Colonic mucosa (tissue), 4 donors: ENCODE measurements at regions of chr16 and their contacts with region 1.

Region 1: DNA sequence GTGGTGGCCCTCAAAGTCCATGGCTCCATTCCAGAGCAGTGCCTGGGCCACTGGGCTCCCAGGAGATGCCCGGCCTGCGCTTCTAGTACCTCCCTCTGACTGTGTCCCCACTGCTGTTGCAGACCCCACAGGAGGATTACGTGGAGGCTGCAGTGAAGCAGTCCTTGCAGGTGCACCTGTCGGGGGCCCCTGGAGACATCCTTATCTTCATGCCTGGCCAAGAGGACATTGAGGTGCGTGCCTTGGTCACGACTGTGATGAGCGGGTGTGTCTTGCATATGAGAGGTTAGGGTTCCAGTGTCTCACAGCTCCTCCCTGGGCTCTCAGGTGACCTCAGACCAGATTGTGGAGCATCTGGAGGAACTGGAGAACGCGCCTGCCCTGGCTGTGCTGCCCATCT is 11.3 kb downstream of the DHX38 start:
- DNase-seq: no peak
- H3K4me3 ChIP-seq: no peak overlapping the region
- H3K27ac ChIP-seq: no peak overlapping the region
- H3K4me1 ChIP-seq: no peaks in the 10 kb centered on the region
- H3K27me3 ChIP-seq: no peaks in the 10 kb centered on the region
- CTCF ChIP-seq: no peak

Region 2: GRCh38 chr16:72042157-72042660 is 62.7 kb before region 1 on chr16:
- intact Hi-C with region 1: no loop called
- DNase-seq: no peak
- H3K4me3 ChIP-seq: no peak overlapping the region
- H3K27ac ChIP-seq: no peak overlapping the region
- H3K4me1 ChIP-seq: no peaks in the 10 kb centered on the region
- H3K27me3 ChIP-seq: no peaks in the 10 kb centered on the region
- CTCF ChIP-seq: no peak

Region 3: GRCh38 chr16:72066747-72067146 is 38.2 kb before region 1 on chr16:
- intact Hi-C with region 1: loop called (anchors 5 kb)
- DNase-seq: no peak
- H3K4me3 ChIP-seq: no peak overlapping the region
- H3K27ac ChIP-seq: no peak overlapping the region
- H3K4me1 ChIP-seq: no peaks in the 10 kb centered on the region
- H3K27me3 ChIP-seq: no peaks in the 10 kb centered on the region
- CTCF ChIP-seq: peak; percentile 41

Region 4: GRCh38 chr16:72182976-72183375 is 78.1 kb after region 1 on chr16:
- intact Hi-C with region 1: no loop called
- DNase-seq: no peak
- H3K4me3 ChIP-seq: no peak overlapping the region
- H3K27ac ChIP-seq: no peak overlapping the region
- H3K4me1 ChIP-seq: no peaks in the 10 kb centered on the region
- H3K27me3 ChIP-seq: no peaks in the 10 kb centered on the region
- CTCF ChIP-seq: no peak